GM10248 (cell line): ENCODE measurements at regions of chr1 and their contacts with region 1.

Region 1: DNA sequence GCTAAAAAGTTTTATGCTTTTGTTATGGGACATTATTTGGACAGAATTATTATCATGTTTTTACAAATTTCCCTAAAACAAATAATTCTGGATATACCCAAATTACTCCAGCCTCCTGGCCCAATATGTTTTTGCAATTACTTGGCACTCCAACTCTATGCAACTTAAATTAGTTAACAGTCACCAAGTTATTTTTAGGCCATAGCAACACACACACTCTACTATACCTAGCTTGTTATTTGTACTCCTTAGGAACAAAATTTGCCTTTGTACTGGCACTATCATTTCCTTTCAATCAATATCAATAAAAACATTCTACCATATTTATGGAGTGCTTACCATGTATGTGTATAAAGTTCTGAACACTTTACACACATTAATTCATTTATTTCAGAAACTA is 7.7 kb downstream of the DUSP10 start:
- DNase-seq: no peak
- CTCF ChIP-seq: no peak

Region 2: DNA sequence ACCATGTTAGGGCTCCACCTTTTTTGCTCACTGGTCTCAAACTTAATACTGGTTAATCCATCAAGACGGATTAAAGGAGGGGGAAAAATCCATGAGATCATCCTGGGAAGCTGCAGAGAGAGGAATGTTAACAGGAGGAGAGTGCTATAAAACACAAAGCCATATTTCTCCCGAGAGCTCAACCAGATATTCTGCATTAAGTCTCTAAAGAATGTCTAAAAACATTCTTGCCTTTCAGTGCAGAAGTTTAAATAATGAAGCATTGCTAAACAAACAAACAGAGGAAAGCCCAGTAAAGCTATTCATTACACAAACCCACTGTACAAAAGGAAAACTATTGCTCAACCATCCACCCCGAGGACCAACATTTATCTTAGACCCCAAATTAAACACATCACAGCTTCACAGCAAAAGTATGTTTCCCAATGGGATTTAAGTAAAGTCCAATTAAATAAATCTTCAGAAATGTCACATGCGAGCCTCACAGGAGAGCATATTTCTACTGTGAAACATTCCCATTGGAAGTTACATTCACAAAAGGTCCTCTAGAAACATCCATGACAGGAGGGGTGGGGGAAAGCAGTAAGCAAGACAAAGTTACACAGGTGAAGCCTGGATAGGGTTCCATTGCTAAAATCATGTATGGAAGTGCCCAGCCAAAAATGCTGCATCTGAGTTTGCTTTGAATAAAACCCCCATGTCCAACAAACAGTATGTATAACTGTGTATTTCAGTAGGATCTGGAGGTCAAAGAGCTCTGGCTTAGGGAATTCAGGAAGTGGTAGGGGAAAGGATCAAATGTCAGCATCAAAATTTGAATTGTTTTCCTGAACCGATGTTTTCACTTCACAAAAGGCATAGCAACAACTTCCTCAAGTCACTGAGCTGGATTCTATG is 15.6 kb before region 1 on chr1:
- CTCF ChIA-PET with region 1: interaction called, 93 read pairs
- POLR2A ChIA-PET with region 1: interaction called, 4 read pairs
- DNase-seq: no peak
- CTCF ChIP-seq: no peak